ENCODE measurements at regions of chr1 and their contacts with region 1.

Region 1: GRCh38 chr1:104905322-104905721 is 1155.6 kb downstream of the AMY1C start:
- DNase-seq: no peak
- H3K4me3 Mint-ChIP-seq: no peak overlapping the region
- H3K27ac Mint-ChIP-seq: no peak overlapping the region
- H3K4me1 Mint-ChIP-seq: no peaks in the 10 kb centered on the region
- H3K27me3 Mint-ChIP-seq: no peaks in the 10 kb centered on the region
- CTCF ChIP-seq: no peak

Region 2: GRCh38 chr1:104387716-104388508 is 517.4 kb before region 1 on chr1:
- CTCF ChIA-PET with region 1: no interaction called
- POLR2A ChIA-PET with region 1: no interaction called
- intact Hi-C with region 1: no loop called
- DNase-seq: no peak
- H3K4me3 Mint-ChIP-seq: no peak overlapping the region
- H3K27ac Mint-ChIP-seq: no peak overlapping the region
- H3K4me1 Mint-ChIP-seq: no peaks in the 10 kb centered on the region
- H3K27me3 Mint-ChIP-seq: no peaks in the 10 kb centered on the region
- CTCF ChIP-seq: no peak

Region 3: GRCh38 chr1:104868794-104869193 is 36.5 kb before region 1 on chr1:
- CTCF ChIA-PET with region 1: no interaction called
- POLR2A ChIA-PET with region 1: no interaction called
- intact Hi-C with region 1: loop called (anchors 5 kb)
- DNase-seq: no peak
- H3K4me3 Mint-ChIP-seq: no peak overlapping the region
- H3K27ac Mint-ChIP-seq: no peak overlapping the region
- H3K4me1 Mint-ChIP-seq: no peaks in the 10 kb centered on the region
- H3K27me3 Mint-ChIP-seq: no peaks in the 10 kb centered on the region
- CTCF ChIP-seq: no peak